Activated CD4-positive, alpha-beta memory T cell treated with anti-CD3 and anti-CD28 coated beads, Interleukin-2, amount 10 ng/mL, durations not matched to agents 7 days and 5 days (primary cell): ENCODE measurements at regions of chr6 and their contacts with region 1.

Region 1: GRCh38 chr6:36968266-36968977 is 13.9 kb downstream of the PI16 start:
- DNase-seq: no peak
- H3K4me3 Mint-ChIP-seq: no peak overlapping the region
- H3K27ac Mint-ChIP-seq: no peak overlapping the region
- H3K4me1 Mint-ChIP-seq: peaks cover 19% of the 10 kb centered on the region
- H3K27me3 Mint-ChIP-seq: no peaks in the 10 kb centered on the region

Region 2: DNA sequence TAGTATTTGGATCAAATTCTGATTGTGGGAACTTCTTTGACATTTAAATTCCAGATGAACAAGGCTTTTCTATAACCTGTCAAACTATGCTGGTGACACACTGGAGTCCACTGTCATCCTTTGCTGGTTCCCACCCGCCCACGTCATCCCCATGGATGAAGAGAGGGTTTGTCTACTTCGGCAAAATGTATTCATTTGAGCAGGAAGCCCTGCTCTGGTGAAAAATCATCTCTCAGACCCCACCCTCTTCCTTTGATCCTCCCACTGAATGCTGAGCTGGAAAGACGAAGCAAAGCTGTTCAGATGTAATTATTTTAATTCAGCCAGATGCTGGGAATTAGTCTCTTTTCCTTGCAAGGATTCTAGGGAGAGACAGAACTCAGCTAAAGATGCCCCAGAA is 179.7 kb before region 1 on chr6:
- CTCF ChIA-PET with region 1: no interaction called
- POLR2A ChIA-PET with region 1: no interaction called
- DNase-seq: no peak
- H3K4me3 Mint-ChIP-seq: no peak overlapping the region
- H3K27ac Mint-ChIP-seq: no peak overlapping the region
- H3K4me1 Mint-ChIP-seq: no peaks in the 10 kb centered on the region
- H3K27me3 Mint-ChIP-seq: peaks cover 35% of the 10 kb centered on the region

Region 3: DNA sequence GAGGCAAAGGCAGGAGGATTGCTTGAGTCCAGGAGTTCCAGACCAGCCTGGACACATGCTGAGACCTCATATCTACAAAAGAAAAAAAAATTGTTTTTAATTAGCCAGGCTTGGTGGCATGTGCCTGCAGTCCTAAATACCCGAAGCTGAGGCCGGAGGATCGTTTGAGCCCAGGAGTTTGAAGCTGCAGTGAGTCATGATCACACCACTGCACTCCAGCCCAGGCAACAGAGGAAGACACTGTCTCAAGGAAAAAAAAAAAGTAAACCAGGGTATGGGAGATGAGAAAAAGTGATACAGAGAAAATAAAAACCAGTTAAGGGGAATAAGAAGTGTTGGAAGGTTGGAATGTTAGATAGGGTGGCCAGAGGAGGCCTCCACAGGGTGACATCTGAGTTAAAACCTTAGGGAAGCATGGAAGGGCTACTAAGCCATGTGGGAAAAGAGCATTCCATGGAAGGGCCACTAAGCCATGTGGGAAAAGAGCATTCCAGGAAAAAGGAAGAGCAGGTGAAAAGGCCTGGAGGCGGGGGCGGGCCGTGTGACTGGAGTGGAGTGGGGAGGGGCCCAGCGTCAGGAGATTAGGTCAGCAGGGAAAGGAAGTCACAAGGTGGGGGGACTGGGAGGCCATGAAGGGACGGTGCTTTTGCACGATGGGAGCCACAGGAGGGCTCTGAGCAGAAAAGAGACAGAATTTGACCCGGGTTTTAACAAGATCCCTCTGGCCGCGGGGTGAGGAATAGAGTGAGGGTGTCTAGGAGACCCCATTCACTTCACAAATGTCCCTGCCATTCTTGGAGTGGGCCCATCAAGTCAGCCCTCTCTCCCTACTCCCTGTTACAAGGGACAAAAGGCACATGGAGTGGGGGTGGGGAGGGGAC is 147.5 kb before region 1 on chr6:
- CTCF ChIA-PET with region 1: no interaction called
- POLR2A ChIA-PET with region 1: no interaction called
- DNase-seq: no peak
- H3K4me3 Mint-ChIP-seq: no peak overlapping the region
- H3K27ac Mint-ChIP-seq: no peak overlapping the region
- H3K4me1 Mint-ChIP-seq: peaks cover 11% of the 10 kb centered on the region
- H3K27me3 Mint-ChIP-seq: peaks cover 8% of the 10 kb centered on the region

Region 4: GRCh38 chr6:36955671-36956445 is 12.6 kb before region 1 on chr6:
- CTCF ChIA-PET with region 1: no interaction called
- POLR2A ChIA-PET with region 1: interaction called, 17 read pairs
- DNase-seq: no peak
- H3K4me3 Mint-ChIP-seq: peak overlapping the region; percentile 62
- H3K27ac Mint-ChIP-seq: no peak overlapping the region
- H3K4me1 Mint-ChIP-seq: peaks cover 53% of the 10 kb centered on the region
- H3K27me3 Mint-ChIP-seq: peaks cover 6% of the 10 kb centered on the region